Heart left ventricle (tissue), 16 donors: ENCODE measurements at regions of chr4 and their contacts with region 1.

Region 1: GRCh38 chr4:88211473-88212252 is 53.2 kb upstream of the ABCG2 start:
- DNase-seq: peak in 2 of 5 donors; percentile 29 to 33
- ATAC-seq: peak in 3 of 4 donors; percentile 55 to 63 (median 62)
- H3K4me3 ChIP-seq: no peak overlapping the region
- H3K27ac ChIP-seq: no peak overlapping the region
- H3K4me1 ChIP-seq: peaks cover 0 to 3% (median 0%) of the 10 kb centered on the region in 12 donors
- H3K27me3 ChIP-seq: no peaks in the 10 kb centered on the region
- CTCF ChIP-seq: peak; percentile 62 to 86 (median 74)
- POLR2A ChIP-seq: no peak

Region 2: DNA sequence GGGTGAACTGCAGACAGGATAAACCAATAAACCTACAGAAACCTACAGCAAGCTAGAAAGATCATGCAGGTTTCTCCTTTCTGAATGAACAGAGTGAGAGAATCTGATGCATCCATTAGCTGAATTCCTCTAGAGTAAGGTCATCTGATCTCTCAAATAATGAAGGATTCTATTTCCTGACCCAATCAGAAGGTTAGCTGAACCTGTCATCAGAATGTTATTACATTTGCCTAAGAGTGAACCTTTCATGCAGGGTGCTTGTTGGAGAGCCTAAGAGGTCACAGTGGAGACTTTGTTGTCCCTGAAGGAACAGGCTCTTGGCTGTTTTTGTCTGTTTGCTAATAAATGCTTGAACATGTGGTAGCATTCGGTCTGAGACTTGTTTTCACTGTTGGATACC is 354.8 kb before region 1 on chr4:
- intact Hi-C with region 1: loop called (anchors 1 to 5 kb)
- DNase-seq: no peak
- ATAC-seq: no peak
- H3K4me3 ChIP-seq: no peak overlapping the region
- H3K27ac ChIP-seq: no peak overlapping the region
- H3K4me1 ChIP-seq: peaks cover 0 to 22% (median 0%) of the 10 kb centered on the region in 12 donors
- H3K27me3 ChIP-seq: no peaks in the 10 kb centered on the region
- CTCF ChIP-seq: no peak
- POLR2A ChIP-seq: no peak

Region 3: DNA sequence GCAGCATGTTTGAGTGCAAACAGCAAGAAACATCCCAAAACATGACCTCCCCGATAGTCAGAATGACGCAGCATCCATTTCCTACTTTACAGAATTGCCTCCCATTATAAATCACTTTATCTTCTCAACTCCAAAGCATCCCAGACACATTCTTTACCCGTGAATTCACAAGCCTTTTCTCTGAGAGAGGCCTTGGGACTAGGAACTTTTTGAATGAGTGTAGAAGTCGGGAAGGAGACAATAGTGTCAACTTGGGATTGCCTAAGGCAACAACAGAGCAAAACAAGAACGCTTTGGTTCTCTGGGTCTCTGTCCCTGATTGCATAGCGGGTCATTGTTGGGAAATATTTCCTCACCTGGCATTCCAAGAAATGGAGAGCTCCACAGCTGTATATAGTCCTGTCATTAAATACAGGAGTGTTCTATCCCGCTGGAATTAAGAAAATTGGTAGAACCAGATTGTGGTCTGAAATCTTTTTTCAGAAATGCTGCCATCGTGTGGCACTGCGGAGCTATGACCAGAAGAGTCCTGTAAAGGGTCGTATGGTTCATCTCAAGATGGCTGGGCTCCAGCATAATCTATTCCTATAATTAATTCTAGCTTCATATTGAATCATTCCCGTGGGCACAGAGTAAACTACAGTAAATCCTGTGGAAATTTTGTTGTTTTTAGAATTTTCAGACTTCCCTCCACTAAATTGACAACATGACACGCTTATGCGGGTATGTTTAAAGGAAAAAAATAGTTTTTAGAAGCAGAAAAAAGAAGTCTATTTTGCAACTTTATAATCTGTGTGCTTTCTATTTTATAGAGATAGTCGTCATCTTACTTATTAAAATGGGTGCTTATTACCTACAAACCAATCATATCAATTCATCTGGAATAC is 238.1 kb before region 1 on chr4:
- intact Hi-C with region 1: loop called in 1 of 10 experiments (anchors 5 kb)
- DNase-seq: peak; percentile 43 to 70 (median 52)
- ATAC-seq: peak in 3 of 4 donors; percentile 53 to 81 (median 76)
- H3K4me3 ChIP-seq: peak overlapping the region in 2 of 12 donors; percentile 11 to 13
- H3K27ac ChIP-seq: no peak overlapping the region
- H3K4me1 ChIP-seq: peaks cover 0 to 19% (median 0%) of the 10 kb centered on the region in 12 donors
- H3K27me3 ChIP-seq: peaks cover 0 to 21% (median 0%) of the 10 kb centered on the region in 9 donors
- CTCF ChIP-seq: peak; percentile 71 to 90 (median 82)
- POLR2A ChIP-seq: no peak

Region 4: GRCh38 chr4:88033309-88033708 is 178.4 kb before region 1 on chr4:
- intact Hi-C with region 1: loop called (anchors 1 to 5 kb)
- DNase-seq: peak in 2 of 5 donors; percentile 25 to 28
- ATAC-seq: peak in 3 of 4 donors; percentile 48 to 62 (median 62)
- H3K4me3 ChIP-seq: no peak overlapping the region
- H3K27ac ChIP-seq: no peak overlapping the region
- H3K4me1 ChIP-seq: peaks cover 0 to 11% (median 0%) of the 10 kb centered on the region in 12 donors
- H3K27me3 ChIP-seq: no peaks in the 10 kb centered on the region
- CTCF ChIP-seq: peak; percentile 54 to 76 (median 67)
- POLR2A ChIP-seq: no peak

Region 5: DNA sequence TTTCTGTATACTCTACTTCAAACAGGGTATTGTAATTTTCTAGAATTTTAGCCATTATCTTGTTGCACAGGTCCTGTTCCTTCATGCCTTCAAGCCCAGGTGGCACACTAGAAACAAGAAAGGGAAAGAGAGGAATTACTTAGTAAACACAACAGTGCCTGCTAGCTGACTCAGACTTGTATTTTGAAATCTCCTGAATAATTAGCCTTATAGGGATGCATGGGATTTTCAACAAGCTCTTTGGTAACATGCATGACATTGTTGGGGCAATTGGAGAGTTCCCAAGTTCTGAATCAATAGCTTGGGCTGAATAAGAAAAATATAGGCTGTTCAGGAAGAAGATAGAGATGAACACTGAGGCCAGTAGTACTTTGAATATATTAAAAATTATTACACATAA is 726.5 kb after region 1 on chr4:
- intact Hi-C with region 1: no loop called
- DNase-seq: no peak
- ATAC-seq: no peak
- H3K4me3 ChIP-seq: no peak overlapping the region
- H3K27ac ChIP-seq: no peak overlapping the region
- H3K4me1 ChIP-seq: peaks cover 0 to 8% (median 0%) of the 10 kb centered on the region in 12 donors
- H3K27me3 ChIP-seq: no peaks in the 10 kb centered on the region
- CTCF ChIP-seq: no peak
- POLR2A ChIP-seq: no peak